HCT116 (cell line): ENCODE measurements at regions of chr11 and their contacts with region 1.

Region 1: GRCh38 chr11:130434521-130435223 is 6.3 kb upstream of the ADAMTS8 start:
- DNase-seq: peak; percentile 68
- ATAC-seq: peak; percentile 82
- H3K4me3 ChIP-seq: peak overlapping the region; percentile 58 to 70
- H3K27ac ChIP-seq: no peak overlapping the region
- H3K4me1 ChIP-seq: peaks cover 0 to 3% of the 10 kb centered on the region in 2 experiments; a peak in 1 of 4 replicates
- H3K27me3 ChIP-seq: peaks cover 7% of the 10 kb centered on the region; the same call in 1 of the 2 replicates
- CTCF ChIP-seq: peak; percentile 76 to 97 (median 86)
- POLR2A ChIP-seq: no peak
- RAD21 ChIP-seq: peak; percentile 91

Region 2: DNA sequence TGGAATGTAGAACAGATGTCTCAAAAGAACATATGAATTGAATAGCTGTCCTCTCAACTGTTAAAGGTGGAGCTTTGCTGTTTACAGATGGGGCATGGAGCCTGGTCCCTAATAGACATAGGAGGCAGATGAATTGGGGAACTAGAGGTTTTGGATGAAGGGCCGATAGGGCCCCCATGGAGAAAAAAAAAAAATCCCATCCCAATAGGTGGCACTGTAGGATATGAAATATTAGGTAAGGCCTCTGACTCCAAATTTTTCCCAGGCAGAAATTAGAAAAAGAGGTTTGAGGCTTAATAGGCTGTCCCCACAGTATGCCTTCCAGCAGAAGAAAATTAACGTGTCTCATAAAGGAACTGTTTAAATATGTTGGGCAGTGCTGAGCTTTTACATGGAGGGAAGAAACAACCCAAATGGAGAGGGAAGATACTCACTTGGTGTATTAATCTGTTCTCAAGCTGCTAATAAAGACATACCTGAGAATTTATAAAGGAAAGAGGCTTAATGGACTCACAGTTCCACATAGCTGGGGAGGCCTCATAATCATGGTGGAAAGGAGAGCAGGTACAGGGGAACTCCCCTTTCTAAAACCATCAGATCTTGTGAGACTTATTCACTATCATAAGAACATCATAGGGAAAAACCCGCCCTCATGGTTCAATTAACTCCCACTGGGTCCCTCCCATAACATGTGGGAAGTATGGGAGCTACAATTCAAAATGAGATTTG is 649.1 kb before region 1 on chr11:
- CTCF ChIA-PET with region 1: no interaction called
- POLR2A ChIA-PET with region 1: no interaction called
- RAD21 ChIA-PET with region 1: no interaction called
- intact Hi-C with region 1: loop called (anchors 10 kb)
- DNase-seq: no peak
- ATAC-seq: no peak; the same call in 1 of the 2 replicates
- H3K4me3 ChIP-seq: no peak overlapping the region
- H3K27ac ChIP-seq: no peak overlapping the region
- H3K4me1 ChIP-seq: no peaks in the 10 kb centered on the region
- H3K27me3 ChIP-seq: no peaks in the 10 kb centered on the region
- CTCF ChIP-seq: peak; percentile 15 to 43 (median 27); a peak in 4 of 6 replicates
- POLR2A ChIP-seq: no peak
- RAD21 ChIP-seq: peak; percentile 59

Region 3: GRCh38 chr11:130666781-130667251 is 232.1 kb after region 1 on chr11:
- CTCF ChIA-PET with region 1: no interaction called
- POLR2A ChIA-PET with region 1: no interaction called
- RAD21 ChIA-PET with region 1: no interaction called
- intact Hi-C with region 1: loop called (anchors 10 kb)
- DNase-seq: no peak
- ATAC-seq: no peak
- H3K4me3 ChIP-seq: no peak overlapping the region
- H3K27ac ChIP-seq: no peak overlapping the region
- H3K4me1 ChIP-seq: no peaks in the 10 kb centered on the region
- H3K27me3 ChIP-seq: no peaks in the 10 kb centered on the region
- CTCF ChIP-seq: 0 out of 6 replicates have a peak, but pooled peaks of 1 of the 3 experiments have one; percentile 7
- POLR2A ChIP-seq: no peak
- RAD21 ChIP-seq: peak; percentile 43

Region 4: GRCh38 chr11:130861902-130862860 is 427.5 kb after region 1 on chr11:
- CTCF ChIA-PET with region 1: interaction called, 150 read pairs
- POLR2A ChIA-PET with region 1: interaction called, 4 read pairs
- RAD21 ChIA-PET with region 1: interaction called, 7 to 12 read pairs
- intact Hi-C with region 1: loop called (anchors 1 kb)
- DNase-seq: peak; percentile 90
- ATAC-seq: peak; percentile 94
- H3K4me3 ChIP-seq: no peak overlapping the region
- H3K27ac ChIP-seq: no peak overlapping the region
- H3K4me1 ChIP-seq: no peaks in the 10 kb centered on the region
- H3K27me3 ChIP-seq: no peaks in the 10 kb centered on the region
- CTCF ChIP-seq: peak; percentile 99 to 100 (median 99)
- POLR2A ChIP-seq: no peak
- RAD21 ChIP-seq: peak; percentile 100

Region 5: DNA sequence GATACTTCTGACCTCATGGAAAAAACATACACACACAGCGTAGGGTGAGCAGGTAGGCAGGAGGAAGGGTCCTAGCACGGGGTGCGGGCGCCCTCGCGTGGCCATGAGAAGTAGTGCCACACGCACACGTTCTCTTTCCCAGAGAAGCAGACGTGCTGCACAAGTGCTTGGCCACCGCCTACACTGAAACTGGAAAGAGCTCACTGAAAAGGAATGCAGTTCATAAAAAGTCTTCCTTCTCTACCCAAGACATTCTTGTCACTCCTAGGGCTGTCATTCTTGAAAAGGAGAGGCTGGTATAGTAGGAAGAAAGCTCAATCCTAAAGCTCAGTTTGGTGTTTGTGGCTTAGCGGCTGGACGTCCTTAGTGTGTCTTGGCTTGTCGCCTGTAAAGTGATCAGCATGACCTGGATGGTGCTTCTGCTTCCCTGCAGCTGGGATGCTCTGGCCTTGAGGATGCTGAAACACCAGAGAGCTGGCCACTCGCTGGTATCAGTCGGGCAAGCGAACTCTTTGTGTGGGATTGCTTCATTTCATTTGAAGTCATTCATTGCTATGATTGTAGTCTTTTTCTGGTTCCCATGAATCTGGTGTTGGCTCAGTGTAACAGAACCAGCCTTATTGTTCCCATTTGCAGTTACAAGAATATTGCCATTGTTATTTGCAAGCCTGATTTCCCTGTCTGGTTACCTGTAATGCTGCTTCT is 1239.5 kb after region 1 on chr11:
- CTCF ChIA-PET with region 1: no interaction called
- POLR2A ChIA-PET with region 1: no interaction called
- RAD21 ChIA-PET with region 1: no interaction called
- intact Hi-C with region 1: loop called (anchors 5 kb)
- DNase-seq: peak; percentile 3
- ATAC-seq: peak; percentile 91
- H3K4me3 ChIP-seq: no peak overlapping the region
- H3K27ac ChIP-seq: no peak overlapping the region
- H3K4me1 ChIP-seq: no peaks in the 10 kb centered on the region
- H3K27me3 ChIP-seq: no peaks in the 10 kb centered on the region
- CTCF ChIP-seq: peak; percentile 50 to 89 (median 83); a peak in 5 of 6 replicates
- POLR2A ChIP-seq: no peak
- RAD21 ChIP-seq: peak; percentile 77